ENCODE measurements at regions of chr6 and their contacts with region 1.

Region 1: GRCh38 chr6:1596088-1596852 is 13.4 kb upstream of the FOXC1 start:
- DNase-seq: peak in 8 of 10 donors; percentile 47 to 80 (median 60)
- H3K4me3 ChIP-seq: peak overlapping the region in 56 of 59 donors; percentile 15 to 66 (median 46)
- H3K27ac ChIP-seq: peak overlapping the region in 1 of 59 donors; percentile 2
- H3K27me3 ChIP-seq: peaks cover 0 to 43% (median 13%) of the 10 kb centered on the region in 45 donors
- CTCF ChIP-seq: peak; percentile 70 to 98 (median 94)

Region 2: GRCh38 chr6:2353412-2354137 is 757.3 kb after region 1 on chr6:
- intact Hi-C with region 1: loop called in 1 of 2 experiments (anchors 2 kb)
- DNase-seq: peak in 7 of 10 donors; percentile 45 to 75 (median 49)
- H3K4me3 ChIP-seq: peak overlapping the region in 1 of 59 donors; percentile 11
- H3K27ac ChIP-seq: peak overlapping the region in 2 of 59 donors; percentile 21 to 26
- H3K27me3 ChIP-seq: peaks cover 0 to 3% (median 0%) of the 10 kb centered on the region in 45 donors
- CTCF ChIP-seq: peak; percentile 52 to 93 (median 79)

Region 3: GRCh38 chr6:2634139-2634964 is 1038.1 kb after region 1 on chr6:
- intact Hi-C with region 1: loop called (anchors 2 to 5 kb)
- DNase-seq: peak; percentile 56 to 86 (median 76)
- H3K4me3 ChIP-seq: peak overlapping the region; percentile 33 to 74 (median 62)
- H3K27ac ChIP-seq: peak overlapping the region in 54 of 59 donors; percentile 12 to 89 (median 70)
- H3K27me3 ChIP-seq: peaks cover 0 to 12% (median 0%) of the 10 kb centered on the region in 45 donors
- CTCF ChIP-seq: peak; percentile 95 to 100 (median 99)

Region 4: GRCh38 chr6:2749969-2750600 is 1153.8 kb after region 1 on chr6:
- intact Hi-C with region 1: loop called in 1 of 2 experiments (anchors 10 kb)
- DNase-seq: peak in 9 of 10 donors; percentile 44 to 79 (median 69)
- H3K4me3 ChIP-seq: peak overlapping the region in 47 of 59 donors; percentile 2 to 50 (median 30)
- H3K27ac ChIP-seq: peak overlapping the region in 2 of 59 donors; percentile 42
- H3K27me3 ChIP-seq: no peaks in the 10 kb centered on the region
- CTCF ChIP-seq: peak; percentile 84 to 99 (median 93)

Region 5: DNA sequence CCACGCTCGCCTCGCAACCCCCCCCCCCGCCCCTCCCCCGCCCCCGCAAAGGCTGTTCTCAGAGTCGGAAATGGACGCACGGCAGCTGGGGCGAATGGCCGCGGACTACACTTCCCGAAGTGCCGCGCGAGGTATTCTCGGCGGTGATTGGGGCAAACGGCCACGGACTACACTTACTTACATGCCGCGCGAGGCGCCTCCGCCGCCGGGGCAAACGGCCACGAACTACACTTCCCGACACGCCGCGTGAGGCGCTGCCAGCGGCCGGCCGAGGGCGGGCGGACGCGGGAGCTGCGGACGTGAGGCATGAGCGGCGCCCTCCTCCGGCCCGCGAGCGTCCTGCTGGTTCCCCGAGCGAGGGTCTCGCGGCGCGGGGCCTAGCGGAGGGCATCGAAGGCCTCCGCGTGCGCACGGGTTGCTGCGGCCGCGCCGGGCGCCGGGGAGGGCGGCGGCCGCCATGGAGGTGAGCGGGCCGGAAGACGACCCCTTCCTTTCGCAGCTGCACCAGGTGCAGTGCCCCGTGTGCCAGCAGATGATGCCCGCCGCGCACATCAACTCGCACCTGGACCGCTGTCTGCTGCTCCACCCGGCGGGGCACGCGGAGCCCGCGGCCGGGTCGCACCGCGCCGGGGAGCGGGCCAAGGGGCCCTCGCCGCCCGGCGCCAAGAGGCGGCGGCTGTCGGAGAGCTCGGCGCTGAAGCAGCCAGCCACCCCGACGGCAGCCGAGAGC is 1169.1 kb after region 1 on chr6 and contains the start of gene WRNIP1:
- intact Hi-C with region 1: loop called in 1 of 2 experiments (anchors 10 kb)
- DNase-seq: peak; percentile 98 to 100 (median 99)
- H3K4me3 ChIP-seq: peak within 1 kb of the TSS; percentile 64 to 97 (median 87)
- H3K27ac ChIP-seq: peak within 1 kb of the TSS; percentile 86 to 99 (median 97)
- H3K27me3 ChIP-seq: no peaks in the 10 kb centered on the region
- CTCF ChIP-seq: peak; percentile 18 to 87 (median 60)
- total RNA-seq, gene WRNIP1: 32.1 to 60.1 (median 47.7) TPM

Measured in dorsolateral prefrontal cortex (tissue), 120 donors.